WTC11 (cell line): ENCODE measurements at regions of chr6 and their contacts with region 1.

Region 1: GRCh38 chr6:83615025-83615999 is 93.6 kb downstream of the SNAP91 start:
- DNase-seq: no peak
- ATAC-seq: peak; percentile 90
- H3K4me3 Mint-ChIP-seq: no peak overlapping the region
- H3K27ac Mint-ChIP-seq: no peak overlapping the region
- H3K4me1 Mint-ChIP-seq: no peaks in the 10 kb centered on the region; the same call in 1 of the 2 replicates
- H3K27me3 Mint-ChIP-seq: no peaks in the 10 kb centered on the region
- CTCF ChIP-seq: 0 out of 2 replicates have a peak, but pooled peaks have one; percentile 59

Region 2: GRCh38 chr6:83536034-83536646 is 79.2 kb before region 1 on chr6:
- CTCF ChIA-PET with region 1: interaction called, 11 read pairs
- POLR2A ChIA-PET with region 1: no interaction called
- DNase-seq: peak; percentile 74
- ATAC-seq: peak; percentile 84
- H3K4me3 Mint-ChIP-seq: no peak overlapping the region
- H3K27ac Mint-ChIP-seq: no peak overlapping the region
- H3K4me1 Mint-ChIP-seq: no peaks in the 10 kb centered on the region
- H3K27me3 Mint-ChIP-seq: peaks cover 3% of the 10 kb centered on the region
- CTCF ChIP-seq: peak; percentile 68

Region 3: GRCh38 chr6:83603551-83603950 is 11.8 kb before region 1 on chr6:
- CTCF ChIA-PET with region 1: interaction called, 23 read pairs
- POLR2A ChIA-PET with region 1: no interaction called
- DNase-seq: no peak
- ATAC-seq: no peak
- H3K4me3 Mint-ChIP-seq: no peak overlapping the region
- H3K27ac Mint-ChIP-seq: no peak overlapping the region
- H3K4me1 Mint-ChIP-seq: no peaks in the 10 kb centered on the region
- H3K27me3 Mint-ChIP-seq: no peaks in the 10 kb centered on the region
- CTCF ChIP-seq: no peak

Region 4: GRCh38 chr6:83708970-83709747 is 93.8 kb after region 1 on chr6 and contains the start of gene SNAP91:
- CTCF ChIA-PET with region 1: interaction called, 13 read pairs
- POLR2A ChIA-PET with region 1: no interaction called
- DNase-seq: peak; percentile 81
- ATAC-seq: peak; percentile 75
- H3K4me3 Mint-ChIP-seq: peak within 1 kb of the TSS; percentile 88
- H3K27ac Mint-ChIP-seq: no peak within 1 kb of the TSS
- H3K4me1 Mint-ChIP-seq: peaks cover 7% of the 10 kb centered on the region
- H3K27me3 Mint-ChIP-seq: peaks cover 63% of the 10 kb centered on the region
- CTCF ChIP-seq: no peak
- total RNA-seq, gene SNAP91: 0.70 to 1.2 TPM (median 1.1 TPM) in 3 replicates

Region 5: GRCh38 chr6:83853178-83854000 is 238.1 kb after region 1 on chr6 and contains the start of gene RIPPLY2:
- CTCF ChIA-PET with region 1: interaction called, 14 read pairs
- POLR2A ChIA-PET with region 1: no interaction called
- DNase-seq: peak; percentile 71
- ATAC-seq: peak; percentile 93
- H3K4me3 Mint-ChIP-seq: peak within 1 kb of the TSS; percentile 86
- H3K27ac Mint-ChIP-seq: no peak within 1 kb of the TSS
- H3K4me1 Mint-ChIP-seq: peaks cover 25% of the 10 kb centered on the region
- H3K27me3 Mint-ChIP-seq: peaks cover 57% of the 10 kb centered on the region
- CTCF ChIP-seq: no peak
- total RNA-seq, gene RIPPLY2: 0.66 to 2.2 TPM (median 2.1 TPM) in 3 replicates